H1 (cell line): ENCODE measurements at regions of chr11 and their contacts with region 1.

Region 1: GRCh38 chr11:76721755-76722677 is 51.5 kb upstream of the LRRC32 start:
- DNase-seq: peak; percentile 54 to 95
- H3K4me3 ChIP-seq: no peak overlapping the region
- H3K27ac ChIP-seq: no peak overlapping the region
- H3K4me1 ChIP-seq: peaks cover 0 to 2% (median 0%) of the 10 kb centered on the region in 4 experiments; a peak in 1 of 7 replicates
- H3K27me3 ChIP-seq: no peaks in the 10 kb centered on the region; a peak in 2 of 7 replicates
- CTCF ChIP-seq: peak; percentile 91 to 94 (median 92)
- EP300 ChIP-seq: no peak
- POLR2A ChIP-seq: no peak
- RAD21 ChIP-seq: peak; percentile 72 to 80

Region 2: GRCh38 chr11:76700177-76701100 is 21.6 kb before region 1 on chr11:
- CTCF ChIA-PET with region 1: interaction called, 39 read pairs
- POLR2A ChIA-PET with region 1: interaction called, 4 read pairs
- DNase-seq: no peak
- H3K4me3 ChIP-seq: no peak overlapping the region
- H3K27ac ChIP-seq: no peak overlapping the region
- H3K4me1 ChIP-seq: peaks cover 9 to 20% (median 16%) of the 10 kb centered on the region in 4 experiments
- H3K27me3 ChIP-seq: no peaks in the 10 kb centered on the region
- CTCF ChIP-seq: no peak
- EP300 ChIP-seq: no peak
- POLR2A ChIP-seq: no peak
- RAD21 ChIP-seq: no peak

Region 3: DNA sequence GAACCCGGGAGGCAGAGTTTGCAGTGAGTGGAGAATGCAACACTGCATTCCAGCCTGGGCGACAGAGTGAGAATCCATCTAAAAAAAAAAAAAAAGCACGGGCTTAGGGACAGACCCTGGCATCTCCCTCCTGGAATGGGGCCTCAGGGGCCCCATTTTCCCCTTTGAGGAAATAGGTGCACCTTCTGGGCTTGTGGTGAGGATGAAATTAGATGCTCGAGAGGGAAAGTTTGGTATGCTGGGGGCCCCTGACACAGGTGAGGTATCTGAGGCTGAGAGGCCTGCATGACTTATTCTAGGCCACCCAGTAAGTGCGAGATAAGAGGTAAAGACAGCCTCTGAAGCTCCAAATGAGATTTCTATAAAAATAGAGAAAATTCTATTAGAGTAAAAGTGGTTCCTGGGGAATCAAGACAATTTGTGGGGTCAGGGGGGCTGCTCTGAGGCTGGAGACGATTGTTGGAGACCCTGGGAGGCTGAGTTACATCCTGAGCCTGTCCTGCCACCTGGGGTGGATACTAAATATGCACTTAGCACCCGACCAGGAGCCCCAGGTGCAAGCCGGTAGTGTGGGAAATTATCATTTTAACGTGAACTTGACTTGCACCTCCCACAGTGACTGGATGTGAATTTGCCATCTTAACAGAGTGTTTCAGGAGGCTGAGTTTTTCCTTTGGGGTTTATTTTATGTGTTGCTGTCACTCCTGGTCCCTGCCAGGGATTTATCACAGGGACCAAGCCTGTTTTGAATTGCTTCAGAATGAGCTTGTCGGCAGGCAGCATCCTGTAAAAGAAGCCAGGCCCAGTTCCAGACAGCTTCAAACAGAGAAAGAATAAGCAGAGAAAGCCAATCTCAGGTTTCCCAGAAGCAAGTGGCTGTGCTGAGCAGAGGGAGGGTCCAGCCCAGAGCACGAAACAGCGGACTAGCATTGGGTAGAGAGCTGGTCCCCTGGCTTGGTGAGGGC is 12.7 kb after region 1 on chr11:
- CTCF ChIA-PET with region 1: interaction called, 77 read pairs
- POLR2A ChIA-PET with region 1: no interaction called
- DNase-seq: no peak
- H3K4me3 ChIP-seq: no peak overlapping the region
- H3K27ac ChIP-seq: no peak overlapping the region
- H3K4me1 ChIP-seq: peaks cover 8 to 17% (median 13%) of the 10 kb centered on the region in 4 experiments
- H3K27me3 ChIP-seq: no peaks in the 10 kb centered on the region
- CTCF ChIP-seq: no peak
- EP300 ChIP-seq: no peak
- POLR2A ChIP-seq: no peak
- RAD21 ChIP-seq: no peak

Region 4: DNA sequence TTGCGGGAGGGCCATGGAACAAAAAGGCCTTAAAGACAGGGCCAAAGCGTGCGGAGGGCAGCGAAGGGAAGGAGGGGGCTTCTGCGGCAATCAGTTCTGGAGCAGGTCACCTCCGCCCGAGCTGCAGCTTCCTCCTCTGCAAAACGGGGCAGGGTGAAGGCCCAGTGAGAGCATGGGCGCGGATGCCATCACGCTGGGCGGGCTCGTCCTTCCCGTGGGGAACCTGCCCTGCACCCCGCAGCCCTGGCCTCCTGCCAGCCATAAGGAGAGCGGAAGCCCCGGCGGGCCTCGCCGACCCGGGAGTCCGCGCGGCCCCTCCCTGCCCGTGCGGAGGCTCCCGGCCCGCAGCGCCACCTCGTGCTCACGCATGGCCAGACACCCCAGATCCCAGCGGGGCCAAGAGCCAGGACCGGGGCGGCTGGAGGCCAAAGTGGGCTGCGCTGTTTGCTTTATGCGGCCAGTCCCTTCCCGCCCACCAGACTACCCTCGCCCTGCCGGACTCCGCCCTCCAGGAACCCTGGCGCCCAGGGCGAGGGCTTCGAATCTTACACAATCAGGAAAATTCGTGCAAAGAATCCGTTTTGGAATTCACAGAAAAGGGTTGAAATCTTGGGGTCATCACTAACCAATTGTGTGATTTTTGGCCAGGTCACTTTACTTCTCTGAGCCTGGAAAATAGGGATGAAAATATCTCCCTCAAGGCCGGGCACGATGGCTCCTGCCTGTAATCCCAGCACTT is 77.2 kb after region 1 on chr11:
- CTCF ChIA-PET with region 1: interaction called, 55 read pairs
- POLR2A ChIA-PET with region 1: no interaction called
- DNase-seq: peak in 1 of 2 experiments; percentile 96
- H3K4me3 ChIP-seq: peak overlapping the region in 3 of 4 experiments; percentile 36 to 49 (median 48); a peak in 4 of 8 replicates
- H3K27ac ChIP-seq: no peak overlapping the region
- H3K4me1 ChIP-seq: peaks cover 3 to 16% (median 7%) of the 10 kb centered on the region in 4 experiments; a peak in 6 of 7 replicates
- H3K27me3 ChIP-seq: no peaks in the 10 kb centered on the region; a peak in 1 of 7 replicates
- CTCF ChIP-seq: peak; percentile 79 to 93 (median 82)
- EP300 ChIP-seq: no peak
- POLR2A ChIP-seq: no peak
- RAD21 ChIP-seq: peak; percentile 76 to 89

Region 5: GRCh38 chr11:76835928-76836612 is 114.1 kb after region 1 on chr11:
- CTCF ChIA-PET with region 1: interaction called, 17 read pairs
- POLR2A ChIA-PET with region 1: no interaction called
- DNase-seq: no peak
- H3K4me3 ChIP-seq: no peak overlapping the region
- H3K27ac ChIP-seq: no peak overlapping the region
- H3K4me1 ChIP-seq: 0 out of 7 replicates have a peak, but pooled peaks cover 0 to 4% (median 0%) of the 10 kb centered on the region in 4 experiments
- H3K27me3 ChIP-seq: no peaks in the 10 kb centered on the region
- CTCF ChIP-seq: no peak
- EP300 ChIP-seq: no peak
- POLR2A ChIP-seq: no peak
- RAD21 ChIP-seq: no peak

Region 6: GRCh38 chr11:77047007-77047927 is 325.3 kb after region 1 on chr11:
- CTCF ChIA-PET with region 1: interaction called, 20 read pairs
- POLR2A ChIA-PET with region 1: no interaction called
- DNase-seq: peak in 1 of 2 experiments; percentile 64
- H3K4me3 ChIP-seq: peak overlapping the region in 1 of 4 experiments; percentile 34; a peak in 1 of 8 replicates
- H3K27ac ChIP-seq: no peak overlapping the region
- H3K4me1 ChIP-seq: peaks cover 0 to 4% (median 0%) of the 10 kb centered on the region in 4 experiments; a peak in 3 of 7 replicates
- H3K27me3 ChIP-seq: peaks cover 0 to 5% (median under 1%) of the 10 kb centered on the region in 4 experiments; a peak in 2 of 7 replicates
- CTCF ChIP-seq: peak in 2 of 3 experiments; percentile 55 to 60; a peak in 3 of 4 replicates
- EP300 ChIP-seq: no peak
- POLR2A ChIP-seq: no peak
- RAD21 ChIP-seq: peak; percentile 49 to 54